Dorsolateral prefrontal cortex (tissue), 120 donors: ENCODE measurements at regions of chr7 and their contacts with region 1.

Region 1: GRCh38 chr7:424961-425793 is 94.5 kb downstream of the PDGFA start:
- DNase-seq: peak; percentile 18 to 86 (median 69)
- H3K4me3 ChIP-seq: peak overlapping the region in 17 of 59 donors; percentile 0 to 53 (median 15)
- H3K27ac ChIP-seq: peak overlapping the region in 27 of 59 donors; percentile 6 to 64 (median 36)
- H3K27me3 ChIP-seq: peaks cover 0 to 2% (median 0%) of the 10 kb centered on the region in 45 donors
- CTCF ChIP-seq: peak in 1 of 56 donors; percentile 13

Region 2: DNA sequence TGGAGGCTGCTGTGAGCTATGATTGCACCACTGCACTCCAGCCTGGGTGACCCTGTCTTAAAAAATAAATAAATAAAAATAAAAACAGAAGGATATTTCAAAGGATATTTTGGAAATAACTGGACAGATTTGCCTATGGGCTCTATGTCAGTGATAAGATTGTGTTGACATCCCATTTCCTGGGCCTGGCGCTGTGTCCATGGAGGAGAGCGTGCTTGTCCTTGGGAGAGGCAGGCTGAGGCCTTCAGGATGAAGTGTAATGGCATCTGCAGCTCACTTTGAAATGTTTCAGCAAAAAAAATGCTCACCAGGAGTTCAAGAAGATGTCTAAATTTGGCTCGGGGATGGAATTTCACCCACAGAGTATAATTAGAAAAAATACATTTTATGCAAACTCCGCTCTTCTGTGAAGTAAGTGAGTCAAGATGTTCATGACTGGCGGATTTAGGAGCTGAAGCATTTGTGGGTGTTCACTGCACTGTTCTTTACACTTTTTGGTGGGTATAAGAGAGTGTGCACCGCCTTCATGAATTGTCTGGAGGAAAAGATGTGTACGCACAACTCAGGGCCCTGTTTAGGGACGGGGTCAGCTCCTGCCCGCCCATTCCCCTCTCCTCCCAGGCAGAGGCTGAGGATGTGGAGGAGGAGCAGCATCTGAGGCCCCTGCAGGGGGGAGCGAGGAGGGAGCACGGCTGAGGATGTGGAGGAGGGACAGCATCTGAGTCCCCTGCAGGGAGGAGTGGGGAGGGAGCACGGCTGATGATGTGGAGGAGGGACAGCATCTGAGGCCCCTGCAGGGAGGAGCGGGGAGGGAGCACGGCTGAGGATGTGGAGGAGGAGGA is 153.7 kb before region 1 on chr7:
- intact Hi-C with region 1: no loop called
- DNase-seq: peak in 2 of 10 donors; percentile 41 to 47
- H3K4me3 ChIP-seq: no peak overlapping the region
- H3K27ac ChIP-seq: peak overlapping the region in 52 of 59 donors; percentile 1 to 89 (median 66)
- H3K27me3 ChIP-seq: no peaks in the 10 kb centered on the region
- CTCF ChIP-seq: no peak

Region 3: DNA sequence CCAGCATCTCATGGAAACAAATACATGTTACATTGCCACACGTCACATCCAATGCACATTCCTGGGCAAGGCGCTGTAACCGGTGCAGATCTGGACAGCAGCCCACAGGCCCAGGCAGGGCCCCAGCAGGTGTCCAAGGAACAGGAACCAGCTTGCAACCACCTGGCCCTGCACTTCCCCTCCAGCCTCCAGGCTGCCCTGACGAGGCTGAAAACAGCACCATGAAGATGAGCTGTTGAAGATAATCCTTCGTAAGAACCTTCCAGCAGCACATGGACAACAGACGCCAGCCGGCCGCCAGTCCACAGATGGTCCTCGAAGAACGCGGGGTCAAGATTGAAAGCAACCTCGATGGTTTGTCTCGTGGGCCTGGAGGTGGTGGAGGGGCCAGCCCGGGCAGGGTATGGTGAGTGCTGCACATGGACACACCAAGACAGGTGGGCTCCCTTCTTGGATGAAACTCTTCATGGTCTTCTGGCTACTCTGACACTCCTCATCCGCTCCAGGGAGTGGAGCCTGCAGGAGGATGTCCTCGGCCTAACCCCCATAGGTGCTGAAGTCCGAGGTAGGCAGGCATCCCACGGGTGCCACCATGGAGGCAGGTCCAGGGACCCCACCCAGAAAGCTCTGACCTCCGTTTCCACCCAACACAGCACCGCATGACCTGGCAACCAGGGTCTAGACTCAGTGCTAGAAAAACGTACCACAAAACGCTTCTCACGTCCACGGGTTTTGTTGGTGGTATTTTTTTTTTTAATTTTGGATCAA is 71.5 kb after region 1 on chr7:
- intact Hi-C with region 1: loop called in 1 of 2 experiments (anchors 5 kb)
- DNase-seq: peak in 1 of 10 donors; percentile 38
- H3K4me3 ChIP-seq: no peak overlapping the region
- H3K27ac ChIP-seq: peak overlapping the region in 58 of 59 donors; percentile 4 to 99 (median 95)
- H3K27me3 ChIP-seq: no peaks in the 10 kb centered on the region
- CTCF ChIP-seq: no peak

Region 4: DNA sequence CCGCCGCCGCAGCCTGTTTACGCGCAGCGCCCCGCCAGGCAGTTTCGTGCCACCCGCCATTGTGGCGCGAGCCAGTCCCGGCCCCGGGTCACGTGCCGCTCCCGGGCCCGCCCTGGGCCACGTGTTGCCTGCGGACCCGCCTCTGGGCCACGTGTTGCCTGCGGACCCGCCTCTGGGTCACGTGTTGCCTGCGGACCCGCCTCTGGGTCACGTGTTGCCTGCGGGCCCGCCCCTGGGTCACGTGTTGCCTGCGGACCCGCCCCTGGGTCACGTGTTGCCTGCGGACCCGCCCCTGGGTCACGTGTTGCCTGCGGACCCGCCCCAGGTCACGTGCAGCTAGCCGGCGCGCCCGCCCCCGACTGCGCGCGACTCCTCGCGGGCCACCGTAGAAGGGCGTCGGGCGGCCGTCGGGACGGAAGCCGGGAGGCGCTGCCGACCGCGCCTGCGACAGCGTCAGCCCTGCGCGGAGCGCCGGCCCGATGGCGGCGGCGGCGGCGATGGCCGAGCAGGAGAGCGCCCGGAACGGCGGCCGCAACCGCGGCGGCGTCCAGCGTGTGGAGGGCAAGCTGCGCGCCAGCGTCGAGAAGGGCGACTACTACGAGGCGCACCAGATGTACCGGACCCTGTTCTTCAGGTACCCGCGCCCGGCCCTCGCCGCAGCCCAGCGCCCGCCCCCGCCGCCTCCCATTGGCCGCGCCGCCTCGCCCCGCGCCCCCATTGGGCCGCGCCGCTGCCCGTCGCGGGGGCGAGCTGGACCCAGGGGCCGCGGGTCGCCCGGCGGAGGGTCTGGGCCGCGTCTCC is 451.2 kb after region 1 on chr7 and contains the start of gene GET4:
- intact Hi-C with region 1: no loop called
- DNase-seq: peak; percentile 97 to 100 (median 98)
- H3K4me3 ChIP-seq: peak within 1 kb of the TSS; percentile 50 to 92 (median 80)
- H3K27ac ChIP-seq: peak within 1 kb of the TSS; percentile 74 to 97 (median 93)
- H3K27me3 ChIP-seq: no peaks in the 10 kb centered on the region
- CTCF ChIP-seq: peak in 47 of 56 donors; percentile 0 to 65 (median 47)
- total RNA-seq, gene GET4: 25.4 to 54.1 (median 40.7) TPM